ENCODE measurements at regions of chr17 and their contacts with region 1.

Region 1: DNA sequence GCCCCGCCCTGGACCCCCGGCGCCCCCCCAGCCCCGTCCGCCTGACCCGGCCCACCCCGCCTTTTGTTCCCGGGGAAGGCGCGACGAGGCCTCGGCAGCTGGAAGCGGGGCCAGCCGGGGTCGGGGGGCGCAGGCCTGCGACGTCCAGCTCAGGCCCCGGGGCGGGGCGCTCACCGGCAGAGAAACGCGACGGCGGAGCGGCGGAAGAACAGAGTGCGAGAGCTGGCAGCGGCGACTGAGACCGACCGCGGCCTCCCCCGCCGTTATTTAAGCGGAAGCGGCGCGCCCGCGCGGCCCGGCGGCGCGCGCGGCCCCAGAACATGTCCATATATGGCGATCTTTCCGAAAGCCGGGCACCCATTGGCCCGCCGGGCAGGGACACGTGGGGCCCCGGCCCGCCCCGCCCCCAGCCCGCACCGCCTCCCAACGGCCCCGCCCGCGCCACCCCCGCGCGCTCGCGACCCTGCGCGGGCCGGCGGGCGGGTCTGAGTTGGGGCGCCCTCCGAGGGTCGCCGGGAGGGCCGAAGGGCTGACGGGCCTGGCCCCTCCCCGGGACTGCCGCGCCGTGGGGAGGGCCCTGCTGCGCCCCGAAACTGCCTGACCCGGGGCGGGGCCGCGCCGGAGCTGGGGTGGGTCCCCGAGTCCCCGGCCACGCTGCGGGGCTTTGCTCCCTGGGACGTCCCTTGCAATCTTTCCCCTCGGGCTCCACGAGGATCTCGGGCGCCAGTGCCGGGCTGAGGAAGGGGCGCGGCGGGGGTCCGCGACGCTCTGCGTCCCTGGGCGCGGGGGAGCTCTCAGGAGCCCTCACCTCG is at the start of gene ACTG1:
- DNase-seq: peak; percentile 90 to 98
- H3K4me3 ChIP-seq: peak within 1 kb of the TSS; percentile 86
- CTCF ChIP-seq: no peak
- POLR2A ChIP-seq: peak in 1 of 2 donors; percentile 95
- total RNA-seq, gene ACTG1: 3,349 to 4,521 (median 4,085) TPM

Region 2: GRCh38 chr17:81394921-81395599 is 117.7 kb before region 1 on chr17 and contains the start of gene BAHCC1:
- intact Hi-C with region 1: loop called (anchors 5 kb)
- DNase-seq: peak; percentile 100
- H3K4me3 ChIP-seq: peak within 1 kb of the TSS; percentile 39
- CTCF ChIP-seq: no peak
- POLR2A ChIP-seq: peak in 1 of 2 donors; percentile 71
- total RNA-seq, gene BAHCC1: 4.1 to 14.2 (median 10.0) TPM

Measured in lower leg skin (tissue), 4 donors.